Transverse colon (tissue), 4 donors: ENCODE measurements at regions of chr12 and their contacts with region 1.

Region 1: DNA sequence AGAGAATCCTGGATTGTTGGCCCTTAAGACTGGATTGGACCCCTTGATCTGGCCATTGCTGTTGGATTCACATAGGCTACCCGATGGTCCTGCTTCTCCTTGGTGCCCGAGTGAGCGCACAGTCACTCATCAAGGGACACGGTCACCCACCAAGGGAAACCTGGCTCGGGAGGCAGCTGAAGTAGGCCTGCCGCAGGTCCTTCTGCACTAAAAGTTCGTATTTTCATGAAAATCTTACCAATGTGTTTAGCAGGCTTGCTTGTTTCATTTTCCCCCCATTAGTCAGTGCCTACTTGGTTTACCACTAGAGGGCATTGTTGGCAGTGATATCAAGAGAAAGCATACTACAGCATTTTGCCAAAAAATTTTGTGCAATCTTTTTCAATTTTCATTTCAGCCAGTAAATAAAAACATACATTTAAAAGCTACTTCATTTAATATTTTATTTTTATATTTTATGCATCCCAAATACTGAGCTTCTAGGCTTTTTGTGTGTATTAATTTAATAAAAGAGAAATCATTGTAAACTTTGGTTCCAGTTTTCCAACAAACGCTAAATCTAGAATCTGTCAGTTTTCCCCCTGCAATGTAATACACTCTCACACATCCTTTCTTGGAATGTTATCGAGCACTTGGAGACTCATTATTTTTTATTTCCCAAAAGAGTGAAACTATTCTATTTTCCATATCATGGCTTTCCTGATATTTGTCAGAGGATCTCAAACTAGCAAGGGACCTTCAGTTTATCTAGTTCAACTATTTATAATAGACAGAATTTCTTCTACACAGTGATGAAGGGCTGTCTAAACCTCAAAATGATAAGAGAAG is 116.7 kb downstream of the LMNTD1 start:
- DNase-seq: no peak
- H3K4me3 ChIP-seq: peak overlapping the region in 1 of 4 donors; percentile 9
- H3K27ac ChIP-seq: no peak overlapping the region
- H3K4me1 ChIP-seq: peaks cover 0 to 26% (median 7%) of the 10 kb centered on the region in 4 donors
- H3K27me3 ChIP-seq: no peaks in the 10 kb centered on the region
- CTCF ChIP-seq: peak; percentile 68 to 85 (median 81)
- EP300 ChIP-seq: no peak
- POLR2A ChIP-seq: no peak

Region 2: GRCh38 chr12:25101092-25101445 is 335.3 kb before region 1 on chr12:
- in situ Hi-C with region 1: no loop called
- intact Hi-C with region 1: no loop called
- DNase-seq: no peak
- H3K4me3 ChIP-seq: no peak overlapping the region
- H3K27ac ChIP-seq: no peak overlapping the region
- H3K4me1 ChIP-seq: no peaks in the 10 kb centered on the region
- H3K27me3 ChIP-seq: no peaks in the 10 kb centered on the region
- CTCF ChIP-seq: no peak
- EP300 ChIP-seq: no peak
- POLR2A ChIP-seq: no peak

Region 3: GRCh38 chr12:25725931-25726330 is 289.5 kb after region 1 on chr12:
- in situ Hi-C with region 1: no loop called
- intact Hi-C with region 1: no loop called
- DNase-seq: no peak
- H3K4me3 ChIP-seq: no peak overlapping the region
- H3K27ac ChIP-seq: no peak overlapping the region
- H3K4me1 ChIP-seq: peaks cover 0 to 4% (median 0%) of the 10 kb centered on the region in 4 donors
- H3K27me3 ChIP-seq: no peaks in the 10 kb centered on the region
- CTCF ChIP-seq: no peak
- EP300 ChIP-seq: no peak
- POLR2A ChIP-seq: no peak

Region 4: DNA sequence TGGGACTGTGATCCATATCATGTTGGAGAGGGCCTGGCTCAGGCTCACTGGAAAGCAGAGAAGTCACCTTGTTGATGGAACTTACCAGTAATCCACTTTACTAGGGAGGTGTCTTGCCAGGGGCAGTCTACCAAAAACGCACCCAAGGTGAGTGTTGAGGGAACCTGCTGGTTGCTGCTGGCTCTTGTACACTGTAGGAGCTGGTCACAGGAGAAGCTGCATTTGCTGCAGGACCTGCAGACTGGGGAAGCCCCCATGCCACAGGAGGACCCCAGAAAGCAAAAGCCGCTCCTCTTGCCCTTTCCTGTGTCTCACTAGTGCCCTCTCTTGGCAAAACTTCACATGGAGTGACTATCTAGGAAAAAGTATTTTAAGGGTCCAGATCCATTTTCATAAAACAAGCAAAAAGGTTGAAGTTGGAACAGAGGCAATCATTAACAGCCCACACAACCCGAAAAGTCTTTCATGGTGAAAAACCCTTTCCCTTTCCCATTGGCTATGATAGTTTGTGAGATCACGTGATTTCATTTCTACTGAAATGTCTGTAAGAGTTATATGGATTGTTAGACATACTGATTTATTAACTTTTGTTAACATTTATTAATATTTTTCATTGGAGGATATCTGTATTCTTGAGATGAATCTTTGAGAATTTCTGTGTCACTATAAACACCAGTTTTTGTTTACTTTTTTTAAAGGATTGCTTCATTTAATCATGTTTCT is 581.2 kb after region 1 on chr12:
- in situ Hi-C with region 1: loop called in 3 of 4 experiments (anchors 10 to 25 kb)
- intact Hi-C with region 1: no loop called
- DNase-seq: no peak
- H3K4me3 ChIP-seq: no peak overlapping the region
- H3K27ac ChIP-seq: no peak overlapping the region
- H3K4me1 ChIP-seq: peaks cover 0 to 5% (median 0%) of the 10 kb centered on the region in 4 donors
- H3K27me3 ChIP-seq: no peaks in the 10 kb centered on the region
- CTCF ChIP-seq: peak; percentile 23 to 53 (median 46)
- EP300 ChIP-seq: no peak
- POLR2A ChIP-seq: no peak

Region 5: GRCh38 chr12:26028953-26029735 is 592.7 kb after region 1 on chr12:
- in situ Hi-C with region 1: loop called (anchors 10 to 25 kb)
- intact Hi-C with region 1: loop called (anchors 5 kb)
- DNase-seq: peak; percentile 15
- H3K4me3 ChIP-seq: no peak overlapping the region
- H3K27ac ChIP-seq: peak overlapping the region in 3 of 4 donors; percentile 25 to 39 (median 27)
- H3K4me1 ChIP-seq: peaks cover 5 to 33% (median 8%) of the 10 kb centered on the region in 4 donors
- H3K27me3 ChIP-seq: no peaks in the 10 kb centered on the region
- CTCF ChIP-seq: peak; percentile 60 to 79 (median 75)
- EP300 ChIP-seq: no peak
- POLR2A ChIP-seq: no peak

Region 6: GRCh38 chr12:26629864-26630263 is 1193.4 kb after region 1 on chr12:
- in situ Hi-C with region 1: loop called in 1 of 4 experiments (anchors 25 kb)
- intact Hi-C with region 1: no loop called
- DNase-seq: no peak
- H3K4me3 ChIP-seq: no peak overlapping the region
- H3K27ac ChIP-seq: peak overlapping the region in 2 of 4 donors; percentile 38 to 52
- H3K4me1 ChIP-seq: peaks cover 0 to 4% (median 0%) of the 10 kb centered on the region in 4 donors
- H3K27me3 ChIP-seq: no peaks in the 10 kb centered on the region
- CTCF ChIP-seq: peak in 4 of 5 experiments; percentile 14 to 36 (median 24)
- EP300 ChIP-seq: no peak
- POLR2A ChIP-seq: no peak